ENCODE measurements at regions of chr1 and their contacts with region 1.

Region 1: DNA sequence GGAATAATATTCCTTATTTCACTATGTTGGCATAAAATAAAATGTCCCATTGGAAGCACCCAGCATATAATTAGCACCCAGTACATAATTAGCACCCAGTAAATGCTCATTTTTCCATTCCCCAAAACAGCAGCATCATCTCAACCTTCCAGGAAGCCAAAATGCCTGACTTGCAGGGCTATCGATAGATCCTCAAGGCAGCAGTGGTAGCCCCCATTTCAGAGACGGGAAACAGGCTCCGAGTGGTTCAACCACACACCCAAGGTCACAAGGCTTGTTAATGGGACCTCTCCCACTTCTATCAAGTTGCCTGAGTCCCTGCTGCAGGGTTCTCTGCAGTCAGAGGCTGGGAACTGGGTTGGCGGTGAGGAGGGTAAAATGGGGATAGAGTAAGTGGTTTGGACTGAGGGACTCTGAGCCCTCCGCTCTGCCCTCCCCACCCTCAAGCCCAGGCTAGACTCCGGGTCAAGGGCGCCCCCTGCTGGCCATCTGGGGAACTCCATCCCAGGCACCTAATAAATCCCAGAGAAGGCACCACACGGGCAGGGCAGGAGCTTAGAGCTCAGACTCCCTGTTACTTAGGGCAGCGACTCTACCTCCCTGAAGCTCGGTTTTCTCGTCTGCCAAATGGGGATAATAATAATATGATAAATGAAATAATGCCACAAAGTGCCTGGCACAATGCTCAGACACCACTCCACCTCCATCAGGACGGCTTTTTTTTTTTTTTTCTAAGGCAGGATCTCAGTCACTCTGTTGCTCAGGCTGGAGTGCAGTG is 21.9 kb upstream of the LAPTM5 start:
- DNase-seq: peak; percentile 78
- H3K4me3 ChIP-seq: no peak overlapping the region
- H3K27ac ChIP-seq: no peak overlapping the region
- H3K4me1 ChIP-seq: peaks cover 7% of the 10 kb centered on the region
- H3K27me3 ChIP-seq: peaks cover 0 to 3% of the 10 kb centered on the region in 2 experiments
- CTCF ChIP-seq: peak; percentile 90 to 93
- POLR2A ChIP-seq: no peak

Region 2: GRCh38 chr1:30525971-30526651 is 253.4 kb before region 1 on chr1:
- CTCF ChIA-PET with region 1: no interaction called
- POLR2A ChIA-PET with region 1: no interaction called
- dilution Hi-C with region 1: no loop called
- intact Hi-C with region 1: no loop called
- DNase-seq: no peak
- H3K4me3 ChIP-seq: no peak overlapping the region
- H3K27ac ChIP-seq: no peak overlapping the region
- H3K4me1 ChIP-seq: no peaks in the 10 kb centered on the region
- H3K27me3 ChIP-seq: no peaks in the 10 kb centered on the region
- CTCF ChIP-seq: no peak
- POLR2A ChIP-seq: no peak

Region 3: DNA sequence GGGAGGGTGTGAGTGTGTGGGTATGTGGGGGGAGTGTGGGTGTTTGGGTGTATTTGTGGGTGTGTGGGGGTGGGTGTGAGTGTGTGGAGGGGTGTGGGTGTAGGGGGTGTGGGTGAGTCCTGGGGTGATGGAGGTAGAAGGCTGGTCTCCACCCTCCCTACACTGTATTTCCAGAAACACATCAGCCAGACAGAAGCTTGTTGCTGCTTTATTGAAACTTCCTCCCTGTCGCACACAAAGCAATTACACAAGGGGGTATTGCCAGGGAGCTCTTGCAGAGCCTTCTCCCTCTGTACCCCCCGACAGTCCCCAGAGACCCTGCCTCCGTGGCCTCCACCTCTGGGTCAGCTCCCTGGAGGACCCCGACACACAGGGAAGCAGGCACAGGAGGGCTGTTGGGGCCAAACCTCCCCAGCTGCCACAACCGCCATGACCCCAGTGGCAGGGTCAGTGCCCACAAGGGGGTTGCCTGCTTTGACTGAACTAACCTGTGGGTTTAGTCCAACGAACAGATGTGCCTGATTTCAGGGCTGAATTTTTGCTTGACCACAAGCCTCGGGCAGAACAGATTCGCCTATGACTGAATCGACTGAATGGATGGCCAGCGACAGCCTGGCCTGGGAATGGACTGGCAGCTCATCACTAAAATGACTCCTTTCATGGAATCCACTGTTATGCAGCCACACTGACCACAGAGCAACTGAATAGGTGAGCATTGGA is 47.0 kb before region 1 on chr1:
- CTCF ChIA-PET with region 1: interaction called, 100 read pairs
- POLR2A ChIA-PET with region 1: interaction called, 3 read pairs
- dilution Hi-C with region 1: no loop called
- intact Hi-C with region 1: no loop called
- DNase-seq: no peak
- H3K4me3 ChIP-seq: no peak overlapping the region
- H3K27ac ChIP-seq: no peak overlapping the region
- H3K4me1 ChIP-seq: no peaks in the 10 kb centered on the region
- H3K27me3 ChIP-seq: no peaks in the 10 kb centered on the region
- CTCF ChIP-seq: no peak
- POLR2A ChIP-seq: no peak

Region 4: DNA sequence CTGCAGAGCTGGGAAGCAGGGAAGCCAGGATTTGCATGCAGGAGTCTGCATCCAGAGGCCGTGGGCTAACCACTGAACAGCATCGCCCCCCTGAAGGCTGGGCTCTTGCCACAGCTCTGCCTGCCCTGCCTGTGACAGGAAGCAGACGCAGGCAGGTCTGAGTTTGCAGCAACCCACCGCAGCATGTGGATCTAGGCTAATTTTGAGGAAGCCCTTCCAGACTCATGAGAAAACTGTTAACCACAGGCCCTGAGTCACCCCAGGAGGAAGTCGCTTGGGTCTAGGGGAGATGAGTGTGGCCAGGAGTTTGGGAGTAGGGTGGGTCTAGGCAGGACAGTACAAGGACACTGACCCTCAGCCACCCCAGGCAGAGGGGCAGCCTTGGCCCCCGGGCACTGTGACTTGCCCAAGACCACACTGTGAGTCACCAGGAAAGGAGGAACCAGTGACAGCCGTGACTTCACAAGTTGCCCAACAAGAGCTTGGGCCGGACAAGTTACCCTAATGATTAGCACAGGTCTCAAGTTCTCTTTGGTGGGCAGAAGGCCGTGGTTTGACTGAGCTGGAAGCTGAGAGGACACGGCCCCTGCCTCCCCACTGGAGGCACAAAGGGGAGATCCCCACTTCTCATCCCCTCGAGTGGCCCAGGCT is 22.8 kb before region 1 on chr1:
- CTCF ChIA-PET with region 1: interaction called, 38 read pairs
- POLR2A ChIA-PET with region 1: no interaction called
- dilution Hi-C with region 1: no loop called
- intact Hi-C with region 1: no loop called
- DNase-seq: peak; percentile 49
- H3K4me3 ChIP-seq: peak overlapping the region; percentile 27 to 77 (median 51)
- H3K27ac ChIP-seq: peak overlapping the region; percentile 95
- H3K4me1 ChIP-seq: peaks cover 31% of the 10 kb centered on the region
- H3K27me3 ChIP-seq: no peaks in the 10 kb centered on the region
- CTCF ChIP-seq: no peak
- POLR2A ChIP-seq: no peak

Region 5: DNA sequence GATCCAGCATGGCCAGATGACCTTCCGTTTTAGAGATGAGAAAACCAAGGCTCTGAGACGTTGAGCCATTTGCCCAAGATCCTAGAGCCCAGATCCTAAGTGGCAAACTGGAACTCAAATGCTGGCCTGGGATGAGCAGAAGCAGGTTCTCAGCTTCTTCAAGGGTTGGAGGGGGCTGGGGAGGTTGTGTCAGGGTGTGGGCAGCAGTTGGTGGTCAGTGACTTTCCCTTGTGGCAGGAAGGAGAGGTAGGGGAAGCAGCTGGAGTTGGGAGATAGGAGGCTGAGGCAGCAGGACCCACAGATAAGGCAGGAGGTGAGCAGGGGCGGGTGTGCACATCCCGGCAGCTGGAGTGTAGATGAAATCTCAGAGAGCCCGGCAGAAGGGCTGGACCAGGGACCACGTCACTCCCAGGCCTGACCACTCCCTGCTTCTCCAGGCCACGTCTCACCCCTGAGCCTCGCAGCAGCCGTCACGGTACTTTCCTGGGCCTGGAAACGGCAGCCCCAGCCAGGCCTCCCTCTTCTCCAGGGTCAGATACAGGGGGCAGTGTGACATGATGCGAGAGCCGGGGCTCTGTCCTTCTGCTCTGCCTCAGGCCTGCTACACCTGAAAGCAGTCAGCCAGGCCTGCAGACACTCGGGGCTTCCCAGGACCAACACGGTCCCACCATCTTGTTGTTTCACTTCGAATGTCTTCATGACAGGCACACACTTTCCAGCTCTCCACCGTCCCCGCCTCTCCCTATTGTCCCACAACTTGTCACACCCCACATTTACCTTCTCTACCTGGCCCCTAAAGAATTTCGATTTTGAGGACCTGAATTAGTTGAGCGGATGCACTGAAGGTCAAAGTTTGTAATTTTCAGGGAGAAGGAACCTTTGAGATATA is 10.4 kb before region 1 on chr1:
- CTCF ChIA-PET with region 1: interaction called, 11 read pairs
- POLR2A ChIA-PET with region 1: no interaction called
- dilution Hi-C with region 1: no loop called
- intact Hi-C with region 1: no loop called
- DNase-seq: peak; percentile 23
- H3K4me3 ChIP-seq: no peak overlapping the region
- H3K27ac ChIP-seq: no peak overlapping the region
- H3K4me1 ChIP-seq: no peaks in the 10 kb centered on the region
- H3K27me3 ChIP-seq: peaks cover 2% of the 10 kb centered on the region in 2 experiments
- CTCF ChIP-seq: no peak
- POLR2A ChIP-seq: no peak

Region 6: GRCh38 chr1:30911046-30911954 is 131.8 kb after region 1 on chr1:
- CTCF ChIA-PET with region 1: interaction called, 167 read pairs
- POLR2A ChIA-PET with region 1: no interaction called
- dilution Hi-C with region 1: no loop called
- intact Hi-C with region 1: loop called (anchors 1 kb)
- DNase-seq: peak; percentile 75
- H3K4me3 ChIP-seq: no peak overlapping the region
- H3K27ac ChIP-seq: no peak overlapping the region
- H3K4me1 ChIP-seq: peaks cover 6% of the 10 kb centered on the region
- H3K27me3 ChIP-seq: no peaks in the 10 kb centered on the region
- CTCF ChIP-seq: peak; percentile 81 to 88
- POLR2A ChIP-seq: no peak

Region 7: DNA sequence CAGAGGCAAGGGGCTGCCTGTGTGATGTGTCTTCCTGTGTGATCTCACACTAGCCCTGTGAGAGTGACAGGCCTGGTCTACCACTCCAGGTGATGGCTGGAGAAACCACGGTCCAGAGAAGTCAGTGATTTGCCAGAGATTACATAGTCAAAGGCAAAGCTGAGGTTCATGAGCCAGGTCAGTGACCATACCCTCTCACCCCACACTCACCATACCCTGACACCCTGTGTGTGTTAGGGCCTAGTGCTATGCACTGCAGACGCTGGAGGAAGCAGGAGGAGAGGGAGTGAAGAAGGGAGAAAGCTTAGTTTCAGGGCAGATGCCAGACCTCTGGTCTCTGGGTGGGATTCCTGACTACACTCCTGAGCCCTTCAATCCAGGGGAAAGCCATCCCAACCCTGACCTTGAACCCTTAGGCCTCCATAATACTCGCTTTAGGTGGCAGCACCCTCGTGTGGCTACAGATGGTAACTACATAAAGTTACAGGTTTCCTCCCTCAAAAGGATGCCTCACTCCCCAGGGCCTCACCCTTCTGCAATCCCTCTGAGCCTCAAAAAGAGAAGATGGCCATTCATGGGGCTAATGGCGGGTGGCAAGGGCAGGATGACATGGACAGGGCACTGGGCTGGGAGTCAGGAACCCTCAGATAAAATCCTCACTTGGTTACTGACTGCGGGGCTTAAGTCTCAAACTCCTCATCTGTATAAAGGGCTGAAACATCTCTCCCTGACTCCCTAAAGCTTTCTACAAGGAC is 149.8 kb after region 1 on chr1:
- CTCF ChIA-PET with region 1: interaction called, 18 read pairs
- POLR2A ChIA-PET with region 1: no interaction called
- dilution Hi-C with region 1: no loop called
- intact Hi-C with region 1: loop called (anchors 1 kb)
- DNase-seq: peak; percentile 55
- H3K4me3 ChIP-seq: no peak overlapping the region
- H3K27ac ChIP-seq: no peak overlapping the region
- H3K4me1 ChIP-seq: no peaks in the 10 kb centered on the region
- H3K27me3 ChIP-seq: no peaks in the 10 kb centered on the region
- CTCF ChIP-seq: peak; percentile 64 to 71
- POLR2A ChIP-seq: no peak